Calu3 (cell line): ENCODE measurements at regions of chr2 and their contacts with region 1.

Region 1: GRCh38 chr2:68909793-68910674 is 38.8 kb upstream of the BMP10 start:
- DNase-seq: peak; percentile 75
- H3K4me3 Mint-ChIP-seq: no peak overlapping the region
- H3K27ac Mint-ChIP-seq: peak overlapping the region; percentile 9
- H3K4me1 Mint-ChIP-seq: peaks cover 34% of the 10 kb centered on the region
- H3K27me3 Mint-ChIP-seq: no peaks in the 10 kb centered on the region
- CTCF ChIP-seq: peak; percentile 85

Region 2: DNA sequence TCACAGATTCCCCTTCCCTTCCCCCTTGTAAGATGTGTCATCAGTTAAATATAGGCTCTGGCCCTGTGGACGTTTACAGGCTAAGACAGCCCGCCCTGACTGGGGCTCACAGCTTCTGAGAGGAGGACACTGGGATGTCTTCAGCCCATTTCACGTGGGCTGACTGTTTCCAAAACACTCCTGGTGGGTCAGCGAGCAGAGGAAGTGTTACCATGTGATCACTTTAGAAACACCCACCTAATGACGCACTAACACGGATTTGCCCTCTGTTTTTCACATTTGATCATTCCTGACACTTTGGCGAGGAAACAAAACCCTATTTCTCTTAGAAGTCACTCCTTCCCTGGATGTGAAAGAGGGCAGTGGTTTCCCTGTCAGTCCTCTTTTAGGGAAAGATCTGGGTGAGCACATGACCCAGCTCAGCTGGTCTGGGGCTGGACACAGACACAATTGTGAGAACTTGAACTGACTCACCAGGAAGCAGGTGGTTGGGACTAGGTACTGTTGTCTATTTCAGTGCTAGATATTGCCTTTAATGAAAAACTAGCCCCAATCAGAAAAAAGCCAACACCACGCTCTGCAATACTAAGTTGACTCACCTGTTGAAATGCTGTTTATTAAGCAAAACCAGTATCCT is 77.7 kb before region 1 on chr2:
- CTCF ChIA-PET with region 1: no interaction called
- intact Hi-C with region 1: loop called (anchors 5 kb)
- DNase-seq: peak; percentile 71
- H3K4me3 Mint-ChIP-seq: no peak overlapping the region
- H3K27ac Mint-ChIP-seq: peak overlapping the region; percentile 79
- H3K4me1 Mint-ChIP-seq: peaks cover 38% of the 10 kb centered on the region
- H3K27me3 Mint-ChIP-seq: peaks cover 12% of the 10 kb centered on the region
- CTCF ChIP-seq: no peak

Region 3: DNA sequence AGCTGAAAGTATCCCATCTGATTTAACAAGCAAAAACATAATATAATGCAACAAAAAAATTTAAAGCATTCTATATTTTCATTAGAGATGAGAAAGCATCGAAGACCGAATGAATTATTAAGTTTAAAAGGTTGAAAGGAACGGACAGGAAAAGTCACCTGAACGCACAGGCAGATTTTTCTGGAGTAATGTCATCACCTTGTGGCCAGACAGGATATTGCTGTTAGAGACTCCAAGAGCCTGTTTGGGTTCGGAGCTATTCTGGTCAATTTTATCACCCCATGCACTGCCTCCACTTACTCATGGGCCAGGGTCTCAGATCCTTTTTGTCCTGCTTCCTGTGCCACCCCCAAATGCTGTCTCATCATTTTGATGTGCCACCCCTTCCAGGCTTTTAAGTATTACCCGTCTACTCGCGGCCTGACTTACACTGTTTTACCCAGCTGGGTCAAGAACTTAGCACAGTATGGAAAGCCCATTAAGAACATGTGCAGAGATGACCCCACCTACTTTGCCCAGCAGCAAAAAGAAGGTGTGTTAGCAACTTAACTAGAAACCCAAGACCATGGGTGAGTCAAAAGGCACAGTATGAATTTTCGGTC is 15.4 kb after region 1 on chr2:
- CTCF ChIA-PET with region 1: interaction called, 11 read pairs
- intact Hi-C with region 1: no loop called
- DNase-seq: peak; percentile 55
- H3K4me3 Mint-ChIP-seq: no peak overlapping the region
- H3K27ac Mint-ChIP-seq: no peak overlapping the region
- H3K4me1 Mint-ChIP-seq: peaks cover 15% of the 10 kb centered on the region
- H3K27me3 Mint-ChIP-seq: peaks cover 41% of the 10 kb centered on the region
- CTCF ChIP-seq: peak; percentile 84

Region 4: DNA sequence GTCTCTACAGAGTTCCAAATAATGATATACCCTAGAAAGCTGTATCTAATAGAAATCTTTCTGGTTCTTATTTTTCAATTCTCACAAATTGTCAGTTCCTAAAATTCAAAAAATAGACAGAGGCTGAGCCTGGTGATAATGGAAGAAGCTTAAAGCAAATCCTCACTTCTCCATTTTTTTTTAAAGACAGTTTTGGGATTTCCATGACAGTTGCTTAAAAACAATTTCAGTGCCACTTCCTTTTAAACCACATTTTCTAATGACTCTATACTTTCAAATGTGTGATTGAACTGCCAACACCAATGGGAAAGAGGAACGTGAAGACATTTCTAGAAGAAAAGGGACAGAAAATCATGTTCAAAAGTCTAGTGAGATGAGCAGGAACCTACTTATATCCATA is 38.7 kb after region 1 on chr2:
- CTCF ChIA-PET with region 1: no interaction called
- intact Hi-C with region 1: no loop called
- DNase-seq: no peak
- H3K4me3 Mint-ChIP-seq: no peak overlapping the region
- H3K27ac Mint-ChIP-seq: no peak overlapping the region
- H3K4me1 Mint-ChIP-seq: no peaks in the 10 kb centered on the region
- H3K27me3 Mint-ChIP-seq: peaks cover 56% of the 10 kb centered on the region
- CTCF ChIP-seq: no peak